ENCODE measurements at regions of chr5 and their contacts with region 1.

Region 1: GRCh38 chr5:141811287-141812155 is 66.7 kb downstream of the PCDH1 start:
- DNase-seq: peak; percentile 80
- ATAC-seq: peak; percentile 62
- H3K4me3 Mint-ChIP-seq: peak overlapping the region; percentile 61
- H3K27ac Mint-ChIP-seq: peak overlapping the region; percentile 61; the same call in 1 of the 2 replicates
- H3K4me1 Mint-ChIP-seq: peaks cover 85% of the 10 kb centered on the region
- H3K27me3 Mint-ChIP-seq: peaks cover 2% of the 10 kb centered on the region; the same call in 1 of the 2 replicates
- CTCF ChIP-seq: peak; percentile 67

Region 2: GRCh38 chr5:141022384-141022783 is 789.1 kb before region 1 on chr5:
- CTCF ChIA-PET with region 1: no interaction called
- POLR2A ChIA-PET with region 1: no interaction called
- DNase-seq: no peak
- ATAC-seq: no peak
- H3K4me3 Mint-ChIP-seq: no peak overlapping the region
- H3K27ac Mint-ChIP-seq: no peak overlapping the region
- H3K4me1 Mint-ChIP-seq: 0 out of 2 replicates have a peak, but pooled peaks cover 3% of the 10 kb centered on the region
- H3K27me3 Mint-ChIP-seq: no peaks in the 10 kb centered on the region
- CTCF ChIP-seq: no peak

Region 3: DNA sequence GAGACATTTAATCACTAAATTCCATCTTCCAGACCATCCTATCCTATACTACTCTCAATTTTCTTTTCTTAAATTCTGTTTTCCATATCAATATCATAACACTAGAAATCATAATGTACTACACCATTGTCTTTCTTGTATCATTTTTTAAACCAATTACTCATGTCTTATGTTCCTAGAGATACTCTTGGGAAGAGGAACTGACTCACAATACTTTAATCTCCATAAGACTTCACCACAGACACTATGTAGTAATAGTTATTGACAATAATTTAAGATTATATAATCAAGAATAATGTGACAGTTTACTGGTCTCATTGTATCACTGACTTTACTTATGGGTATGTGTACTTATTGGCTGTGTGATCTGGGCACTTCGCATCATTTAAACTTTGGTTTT is 278.8 kb before region 1 on chr5:
- CTCF ChIA-PET with region 1: no interaction called
- POLR2A ChIA-PET with region 1: no interaction called
- DNase-seq: no peak
- ATAC-seq: no peak
- H3K4me3 Mint-ChIP-seq: no peak overlapping the region
- H3K27ac Mint-ChIP-seq: no peak overlapping the region
- H3K4me1 Mint-ChIP-seq: no peaks in the 10 kb centered on the region
- H3K27me3 Mint-ChIP-seq: no peaks in the 10 kb centered on the region
- CTCF ChIP-seq: no peak

Region 4: GRCh38 chr5:141672848-141673813 is 138.4 kb before region 1 on chr5:
- CTCF ChIA-PET with region 1: interaction called, 11 read pairs
- POLR2A ChIA-PET with region 1: no interaction called
- DNase-seq: no peak
- ATAC-seq: peak; percentile 2; the same call in 1 of the 2 replicates
- H3K4me3 Mint-ChIP-seq: no peak overlapping the region
- H3K27ac Mint-ChIP-seq: peak overlapping the region; percentile 42
- H3K4me1 Mint-ChIP-seq: peaks cover 32% of the 10 kb centered on the region
- H3K27me3 Mint-ChIP-seq: no peaks in the 10 kb centered on the region
- CTCF ChIP-seq: no peak

Region 5: DNA sequence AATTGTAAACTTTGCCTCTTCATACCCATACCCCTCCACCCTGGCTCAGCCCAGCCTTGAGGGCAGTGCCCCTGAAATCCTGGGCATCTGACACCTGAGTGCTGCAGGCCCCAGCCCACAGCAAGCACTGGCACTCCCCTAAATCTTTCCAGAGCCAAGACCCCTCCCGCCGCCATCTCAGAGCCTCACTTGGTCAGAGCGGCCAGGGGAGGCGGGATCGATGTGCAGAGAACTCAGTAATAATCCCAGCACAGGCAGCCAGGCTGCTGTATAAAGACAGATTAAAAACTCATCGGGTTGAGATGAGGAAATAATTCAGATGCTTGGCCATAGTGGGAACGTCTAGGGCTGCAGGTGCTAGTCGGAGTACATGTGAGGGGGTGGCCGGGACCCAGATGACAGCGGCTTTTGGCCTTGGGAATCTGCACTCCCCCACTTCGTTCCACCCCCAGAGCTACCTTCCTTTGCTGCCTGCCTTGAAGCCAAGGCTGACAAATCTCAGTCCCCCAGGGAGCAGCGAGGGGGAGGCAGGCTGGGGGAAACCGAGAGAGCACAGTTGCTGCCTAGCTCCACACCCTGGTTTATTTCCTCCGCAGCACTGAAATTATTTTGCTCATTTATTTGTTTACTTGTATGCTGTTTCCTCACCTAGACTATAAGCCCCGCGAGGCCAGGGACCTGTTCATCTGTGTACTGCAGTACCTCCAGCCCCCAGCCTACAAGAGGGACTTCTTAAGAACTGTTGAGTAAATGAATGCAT is 110.0 kb before region 1 on chr5:
- CTCF ChIA-PET with region 1: interaction called, 55 read pairs
- POLR2A ChIA-PET with region 1: no interaction called
- DNase-seq: no peak
- ATAC-seq: no peak
- H3K4me3 Mint-ChIP-seq: no peak overlapping the region; the same call in 1 of the 2 replicates
- H3K27ac Mint-ChIP-seq: no peak overlapping the region
- H3K4me1 Mint-ChIP-seq: peaks cover 22% of the 10 kb centered on the region
- H3K27me3 Mint-ChIP-seq: peaks cover 6% of the 10 kb centered on the region
- CTCF ChIP-seq: no peak

Region 6: GRCh38 chr5:141735823-141736222 is 75.7 kb before region 1 on chr5:
- CTCF ChIA-PET with region 1: interaction called, 12 read pairs
- POLR2A ChIA-PET with region 1: no interaction called
- DNase-seq: no peak
- ATAC-seq: peak; percentile 36
- H3K4me3 Mint-ChIP-seq: no peak overlapping the region
- H3K27ac Mint-ChIP-seq: no peak overlapping the region
- H3K4me1 Mint-ChIP-seq: peaks cover 21% of the 10 kb centered on the region
- H3K27me3 Mint-ChIP-seq: no peaks in the 10 kb centered on the region; the same call in 1 of the 2 replicates
- CTCF ChIP-seq: no peak

Region 7: GRCh38 chr5:141778206-141778605 is 33.3 kb before region 1 on chr5:
- CTCF ChIA-PET with region 1: interaction called, 26 read pairs
- POLR2A ChIA-PET with region 1: no interaction called
- DNase-seq: no peak
- ATAC-seq: peak; percentile 45
- H3K4me3 Mint-ChIP-seq: no peak overlapping the region
- H3K27ac Mint-ChIP-seq: no peak overlapping the region
- H3K4me1 Mint-ChIP-seq: peaks cover 38% of the 10 kb centered on the region
- H3K27me3 Mint-ChIP-seq: no peaks in the 10 kb centered on the region
- CTCF ChIP-seq: no peak

Region 8: GRCh38 chr5:141825791-141826560 is 14.5 kb after region 1 on chr5:
- CTCF ChIA-PET with region 1: interaction called, 171 read pairs
- POLR2A ChIA-PET with region 1: interaction called, 13 read pairs
- DNase-seq: no peak
- ATAC-seq: peak; percentile 69
- H3K4me3 Mint-ChIP-seq: no peak overlapping the region
- H3K27ac Mint-ChIP-seq: 0 out of 2 replicates have a peak overlapping the region, but pooled peaks have one; percentile 28
- H3K4me1 Mint-ChIP-seq: peaks cover 62% of the 10 kb centered on the region
- H3K27me3 Mint-ChIP-seq: no peaks in the 10 kb centered on the region
- CTCF ChIP-seq: peak; percentile 37

Region 9: DNA sequence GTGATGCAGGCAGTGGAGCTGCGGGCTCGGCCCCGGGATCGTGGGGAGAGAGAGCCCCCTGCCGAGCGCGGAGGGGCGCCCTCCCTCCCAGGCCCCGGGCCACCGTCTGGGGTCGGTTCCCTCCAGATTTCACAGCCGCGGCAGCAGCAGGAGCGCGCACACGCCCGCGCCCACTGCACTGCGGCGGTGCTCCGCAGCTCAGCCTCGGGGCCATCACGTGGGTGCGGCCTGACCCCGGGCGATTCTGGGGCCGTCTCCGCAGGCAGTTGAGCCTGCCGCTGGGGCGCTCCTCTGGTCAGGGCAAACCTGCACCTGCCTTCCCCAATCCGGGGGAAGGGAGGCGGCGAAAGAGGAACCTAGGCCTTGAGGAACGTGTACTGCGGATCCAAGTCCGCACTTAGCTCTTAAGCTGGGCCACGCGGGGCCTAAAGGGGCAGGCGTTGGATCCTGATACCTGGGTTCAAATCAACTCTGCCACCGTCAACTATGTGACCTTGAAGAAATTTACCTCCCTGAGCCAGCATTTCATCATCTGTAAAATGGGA is 102.8 kb after region 1 on chr5:
- CTCF ChIA-PET with region 1: interaction called, 14 read pairs
- POLR2A ChIA-PET with region 1: no interaction called
- DNase-seq: peak; percentile 77
- ATAC-seq: peak; percentile 79
- H3K4me3 Mint-ChIP-seq: peak overlapping the region; percentile 66
- H3K27ac Mint-ChIP-seq: no peak overlapping the region
- H3K4me1 Mint-ChIP-seq: peaks cover 29% of the 10 kb centered on the region
- H3K27me3 Mint-ChIP-seq: peaks cover 27% of the 10 kb centered on the region
- CTCF ChIP-seq: no peak

Region 10: DNA sequence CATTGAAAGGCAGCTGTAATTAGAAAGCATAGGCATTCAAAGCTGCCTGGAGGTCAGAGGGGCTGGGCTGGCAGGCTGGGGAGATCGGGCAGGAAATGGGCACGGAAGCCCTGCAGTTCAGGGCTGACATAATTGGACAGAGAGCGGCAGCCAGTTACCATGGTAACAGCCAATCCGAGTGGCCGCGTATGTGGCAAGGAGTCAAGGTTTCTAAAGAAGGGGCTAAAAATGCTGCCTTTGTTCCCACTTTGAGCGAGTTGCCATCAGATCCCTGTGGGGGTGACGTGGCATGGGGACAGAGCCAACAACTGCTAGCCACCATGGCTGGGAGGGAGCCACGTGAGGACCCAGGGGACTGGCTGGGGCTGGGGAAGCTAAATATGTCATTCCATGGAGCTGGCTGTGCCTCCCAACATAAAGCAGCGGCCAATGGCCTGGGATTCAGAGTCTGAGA is 252.4 kb after region 1 on chr5:
- CTCF ChIA-PET with region 1: no interaction called
- POLR2A ChIA-PET with region 1: no interaction called
- DNase-seq: peak; percentile 44
- ATAC-seq: peak; percentile 74
- H3K4me3 Mint-ChIP-seq: peak overlapping the region; percentile 48
- H3K27ac Mint-ChIP-seq: no peak overlapping the region
- H3K4me1 Mint-ChIP-seq: peaks cover 11% of the 10 kb centered on the region
- H3K27me3 Mint-ChIP-seq: no peaks in the 10 kb centered on the region
- CTCF ChIP-seq: no peak

Measured in WTC11 (cell line).